Activated CD8-positive, alpha-beta memory T cell treated with anti-CD3 and anti-CD28 coated beads, Interleukin-2, amount 10 ng/mL, durations not matched to agents 7 days and 5 days (primary cell): ENCODE measurements at regions of chr15 and their contacts with region 1.

Region 1: DNA sequence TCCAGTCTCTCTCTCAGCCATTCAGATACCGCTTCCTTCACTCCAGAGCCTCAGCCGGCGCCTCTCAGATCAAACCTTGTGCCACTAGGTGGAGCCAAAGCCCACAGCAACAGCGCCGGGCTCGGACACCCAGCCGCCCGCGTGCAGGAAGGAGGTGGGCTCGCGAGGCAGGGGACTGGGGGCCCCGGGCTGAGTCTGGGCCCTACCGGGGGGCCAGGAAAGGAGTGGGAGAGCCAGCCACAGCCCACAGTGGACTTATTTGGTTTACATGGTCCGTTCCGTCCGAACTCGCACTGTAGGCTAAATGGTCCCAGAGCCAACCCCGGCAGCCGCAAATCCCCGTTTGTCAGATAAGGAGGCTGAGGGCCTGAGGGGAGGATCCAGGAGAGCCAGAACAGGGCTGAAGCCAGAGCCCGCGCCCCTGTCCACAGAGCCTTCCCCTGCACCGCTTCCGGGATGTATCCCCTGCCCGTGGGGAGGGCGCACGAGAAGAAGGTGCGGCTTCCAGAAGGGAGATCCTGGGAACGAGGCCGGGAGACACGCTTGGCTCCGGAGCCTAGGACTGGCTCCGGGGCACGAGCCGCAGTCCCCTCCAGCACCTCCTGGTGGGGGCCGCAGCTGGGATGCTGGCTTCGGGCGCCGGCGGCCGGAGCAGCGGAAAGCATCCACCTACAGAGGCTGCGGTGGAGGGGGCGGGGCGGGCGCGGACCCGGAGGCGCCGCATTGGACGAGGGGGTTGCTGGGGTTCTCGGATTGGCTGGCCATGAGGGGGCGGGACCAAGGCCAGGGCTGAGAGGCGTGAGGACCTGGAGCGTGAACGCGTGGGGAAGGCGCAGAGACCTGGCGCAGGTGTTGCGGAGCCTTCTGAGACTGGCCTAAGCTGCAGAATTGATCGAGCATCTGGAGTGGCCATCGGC is 6.5 kb upstream of the CYP11A1 start:
- DNase-seq: peak; percentile 97
- ATAC-seq: peak; percentile 96
- H3K4me3 Mint-ChIP-seq: peak overlapping the region; percentile 73
- H3K27ac Mint-ChIP-seq: peak overlapping the region; percentile 75
- H3K4me1 Mint-ChIP-seq: peaks cover 22% of the 10 kb centered on the region
- H3K27me3 Mint-ChIP-seq: peaks cover 33% of the 10 kb centered on the region

Region 2: GRCh38 chr15:74127260-74127953 is 246.6 kb before region 1 on chr15:
- CTCF ChIA-PET with region 1: no interaction called
- DNase-seq: peak; percentile 89
- ATAC-seq: peak; percentile 95
- H3K4me3 Mint-ChIP-seq: no peak overlapping the region
- H3K27ac Mint-ChIP-seq: no peak overlapping the region
- H3K4me1 Mint-ChIP-seq: peaks cover 13% of the 10 kb centered on the region
- H3K27me3 Mint-ChIP-seq: peaks cover 81% of the 10 kb centered on the region

Region 3: GRCh38 chr15:74345051-74345450 is 28.9 kb before region 1 on chr15:
- CTCF ChIA-PET with region 1: no interaction called
- DNase-seq: no peak
- ATAC-seq: no peak
- H3K4me3 Mint-ChIP-seq: no peak overlapping the region
- H3K27ac Mint-ChIP-seq: no peak overlapping the region
- H3K4me1 Mint-ChIP-seq: peaks cover 2% of the 10 kb centered on the region
- H3K27me3 Mint-ChIP-seq: no peaks in the 10 kb centered on the region

Region 4: DNA sequence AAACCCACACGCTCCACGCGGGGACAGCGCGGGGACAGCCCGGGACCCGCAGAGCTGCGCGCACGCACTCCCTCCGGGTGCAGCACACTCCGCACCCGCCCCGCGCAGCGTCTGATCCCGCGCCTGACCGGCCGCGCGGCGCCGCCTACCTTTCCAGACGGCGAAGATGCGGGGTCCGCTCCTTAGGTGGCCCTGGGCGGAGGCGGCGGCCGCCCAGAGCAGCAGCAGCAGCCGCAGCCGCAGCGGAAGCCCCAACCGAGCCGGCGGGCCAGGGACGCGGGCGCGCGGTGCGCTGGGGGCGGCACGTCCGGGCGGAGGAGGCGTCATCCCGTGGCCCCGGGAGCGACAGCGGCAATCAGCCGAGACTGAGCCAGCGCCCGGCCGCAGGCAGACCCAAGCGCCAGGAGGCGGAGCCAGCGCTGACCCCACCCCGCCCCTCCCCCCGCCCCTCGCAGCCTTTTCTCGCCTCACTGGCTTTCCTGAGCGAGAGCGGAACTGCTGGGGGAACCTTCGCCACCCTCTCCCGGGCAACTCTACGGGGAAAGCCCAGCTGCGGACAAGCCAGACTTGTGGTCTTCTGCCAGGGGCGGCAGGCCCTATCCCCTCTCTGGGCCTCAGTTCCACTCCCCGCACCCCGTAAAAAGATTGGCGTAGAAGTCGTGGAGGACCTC is 59.7 kb after region 1 on chr15 and contains the start of gene SEMA7A:
- CTCF ChIA-PET with region 1: interaction called, 668 read pairs
- DNase-seq: peak; percentile 90
- ATAC-seq: peak; percentile 89
- H3K4me3 Mint-ChIP-seq: peak within 1 kb of the TSS; percentile 87
- H3K27ac Mint-ChIP-seq: peak within 1 kb of the TSS; percentile 86
- H3K4me1 Mint-ChIP-seq: peaks cover 61% of the 10 kb centered on the region
- H3K27me3 Mint-ChIP-seq: no peaks in the 10 kb centered on the region
- total RNA-seq, gene SEMA7A: 26.4 to 32.9 TPM

Region 5: DNA sequence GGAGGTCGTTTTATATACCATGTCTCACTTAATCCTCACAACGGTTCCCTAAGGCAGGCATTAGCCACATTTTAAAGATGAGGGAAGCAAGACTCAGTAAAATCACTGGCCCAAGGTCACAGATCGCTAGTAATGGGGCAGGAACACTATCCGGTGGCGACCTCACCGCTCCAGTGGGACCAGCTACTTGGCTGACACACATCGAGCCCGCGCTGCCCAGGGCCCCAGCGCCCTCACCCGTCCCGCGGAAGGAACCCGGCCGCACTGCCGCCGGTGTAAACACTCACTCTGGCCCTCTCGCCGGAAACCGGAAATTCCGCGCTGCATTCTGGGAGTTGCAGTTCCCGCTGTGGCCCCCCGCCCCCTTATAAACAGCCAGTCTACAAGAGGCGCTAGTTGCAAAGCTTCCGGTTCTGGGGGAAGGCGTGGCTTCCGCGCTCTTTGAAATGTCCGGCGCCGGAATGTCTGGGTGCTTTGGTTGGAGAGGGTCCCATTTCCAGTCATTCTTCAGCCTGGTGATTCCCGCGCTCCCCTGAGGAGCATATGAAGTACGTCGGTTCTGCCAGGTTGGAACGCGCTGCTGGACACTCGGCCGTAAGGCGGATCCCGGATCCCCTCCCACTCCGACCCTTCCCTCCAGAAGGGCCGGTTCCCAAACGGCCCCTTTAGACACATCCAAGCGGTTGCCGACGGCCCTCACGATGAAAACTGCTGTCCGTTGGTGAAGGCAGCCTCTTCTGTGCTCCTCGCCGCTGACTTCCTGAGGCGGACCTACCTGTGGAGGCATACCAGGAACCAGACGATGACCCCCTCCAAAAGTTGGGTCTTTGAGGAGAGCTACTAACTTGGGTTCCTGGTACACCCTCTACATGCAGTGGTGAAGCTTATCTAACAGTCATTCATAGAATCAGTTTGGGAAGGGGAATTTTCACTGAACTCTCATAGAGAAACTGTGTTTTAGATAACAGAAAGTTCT is 87.2 kb after region 1 on chr15 and contains the start of gene UBL7:
- CTCF ChIA-PET with region 1: interaction called, 13 read pairs
- DNase-seq: peak; percentile 99
- ATAC-seq: peak; percentile 97
- H3K4me3 Mint-ChIP-seq: peak within 1 kb of the TSS; percentile 97
- H3K27ac Mint-ChIP-seq: peak within 1 kb of the TSS; percentile 94
- H3K4me1 Mint-ChIP-seq: peaks cover 55% of the 10 kb centered on the region
- H3K27me3 Mint-ChIP-seq: no peaks in the 10 kb centered on the region
- total RNA-seq, gene UBL7: 55.9 to 60.9 TPM

Region 6: DNA sequence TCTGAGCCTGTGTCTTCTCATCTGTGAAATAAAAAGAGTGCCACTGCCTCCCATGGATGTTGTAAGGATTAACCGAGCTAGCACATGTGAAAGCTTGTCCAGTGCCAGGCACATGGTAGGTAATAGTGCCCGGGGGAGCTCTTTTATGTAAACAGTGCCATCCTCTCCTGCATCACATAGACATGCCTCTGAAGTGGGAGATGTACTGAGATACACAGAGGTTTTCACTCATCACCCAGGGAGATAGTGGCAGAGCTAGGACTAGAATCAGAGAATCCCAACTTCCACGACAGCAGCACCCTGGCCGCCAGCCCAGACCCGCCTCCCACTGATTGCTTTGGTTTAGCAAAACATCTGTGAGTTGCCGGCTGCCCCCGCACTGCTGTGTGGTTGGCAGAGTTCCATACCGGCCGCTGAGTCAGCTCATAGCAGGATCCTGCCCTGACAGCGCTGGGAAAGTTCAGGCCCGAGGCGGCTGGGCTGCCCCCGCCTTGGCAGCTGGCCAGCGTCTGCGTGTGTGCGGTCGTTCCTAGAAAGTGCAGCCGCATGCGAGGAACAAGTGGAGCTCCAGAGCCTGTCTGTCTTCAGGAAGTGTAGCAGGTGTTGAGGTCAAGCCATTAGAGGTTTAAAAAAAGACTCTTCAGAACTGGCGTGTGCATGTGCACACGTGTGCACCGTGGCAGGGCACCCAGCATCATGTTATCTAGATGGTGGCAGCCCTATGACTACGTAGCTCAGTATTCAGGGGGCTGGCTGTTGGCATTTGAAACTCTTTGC is 172.1 kb after region 1 on chr15:
- CTCF ChIA-PET with region 1: interaction called, 11 read pairs
- DNase-seq: peak; percentile 94
- ATAC-seq: peak; percentile 69
- H3K4me3 Mint-ChIP-seq: peak overlapping the region; percentile 65
- H3K27ac Mint-ChIP-seq: peak overlapping the region; percentile 68
- H3K4me1 Mint-ChIP-seq: peaks cover 79% of the 10 kb centered on the region
- H3K27me3 Mint-ChIP-seq: no peaks in the 10 kb centered on the region

Region 7: GRCh38 chr15:74620636-74621545 is 246.9 kb after region 1 on chr15:
- CTCF ChIA-PET with region 1: interaction called, 40 read pairs
- DNase-seq: peak; percentile 87
- ATAC-seq: peak; percentile 83
- H3K4me3 Mint-ChIP-seq: no peak overlapping the region
- H3K27ac Mint-ChIP-seq: no peak overlapping the region
- H3K4me1 Mint-ChIP-seq: peaks cover 45% of the 10 kb centered on the region
- H3K27me3 Mint-ChIP-seq: no peaks in the 10 kb centered on the region